B cell (primary cell): ENCODE measurements at regions of chr12 and their contacts with region 1.

Region 1: DNA sequence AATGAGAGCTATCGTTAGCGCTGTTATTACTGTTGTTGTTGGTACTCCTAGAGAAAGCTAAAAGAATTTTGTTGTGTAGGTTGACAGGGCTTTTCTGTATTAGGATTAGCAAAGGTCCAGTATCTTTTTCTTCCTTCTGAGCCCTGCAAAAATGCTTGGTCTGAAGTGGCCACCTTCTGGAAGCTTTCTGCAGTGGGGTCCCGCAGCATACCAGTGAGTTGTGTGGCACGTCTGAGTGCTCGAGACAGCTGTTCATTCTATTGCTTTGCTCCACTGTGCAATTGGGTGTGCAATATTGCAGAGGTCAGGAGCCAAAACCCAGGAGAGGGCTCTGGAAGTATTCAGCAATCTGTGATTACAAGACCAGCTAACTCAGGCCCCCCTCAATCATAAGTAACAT is 57.1 kb downstream of the CCDC60 start:
- DNase-seq: no peak
- ATAC-seq: no peak
- H3K4me3 ChIP-seq: no peak overlapping the region
- H3K4me3 Mint-ChIP-seq: no peak overlapping the region
- H3K27ac ChIP-seq: no peak overlapping the region
- H3K27ac Mint-ChIP-seq: no peak overlapping the region
- H3K4me1 ChIP-seq: no peaks in the 10 kb centered on the region
- H3K4me1 Mint-ChIP-seq: no peaks in the 10 kb centered on the region
- H3K27me3 ChIP-seq: peaks cover 0 to 2% (median 0%) of the 10 kb centered on the region in 4 experiments
- H3K27me3 Mint-ChIP-seq: peaks cover 7% of the 10 kb centered on the region
- CTCF ChIP-seq: no peak

Region 2: GRCh38 chr12:119369907-119370546 is 21.6 kb before region 1 on chr12:
- CTCF ChIA-PET with region 1: no interaction called
- POLR2A ChIA-PET with region 1: interaction called, 10 read pairs
- intact Hi-C with region 1: no loop called
- DNase-seq: no peak
- ATAC-seq: no peak
- H3K4me3 ChIP-seq: no peak overlapping the region
- H3K4me3 Mint-ChIP-seq: no peak overlapping the region
- H3K27ac ChIP-seq: no peak overlapping the region
- H3K27ac Mint-ChIP-seq: no peak overlapping the region
- H3K4me1 ChIP-seq: no peaks in the 10 kb centered on the region
- H3K4me1 Mint-ChIP-seq: peaks cover 3% of the 10 kb centered on the region
- H3K27me3 ChIP-seq: peaks cover 0 to 5% (median 0%) of the 10 kb centered on the region in 4 experiments
- H3K27me3 Mint-ChIP-seq: peaks cover 12% of the 10 kb centered on the region
- CTCF ChIP-seq: no peak